ENCODE measurements at regions of chr20 and their contacts with region 1.

Region 1: GRCh38 chr20:4076671-4077070 is 61.3 kb upstream of the RNF24 start:
- DNase-seq: no peak
- H3K4me3 ChIP-seq: no peak overlapping the region
- H3K27ac ChIP-seq: no peak overlapping the region
- H3K4me1 ChIP-seq: no peaks in the 10 kb centered on the region
- H3K27me3 ChIP-seq: no peaks in the 10 kb centered on the region
- CTCF ChIP-seq: no peak

Region 2: DNA sequence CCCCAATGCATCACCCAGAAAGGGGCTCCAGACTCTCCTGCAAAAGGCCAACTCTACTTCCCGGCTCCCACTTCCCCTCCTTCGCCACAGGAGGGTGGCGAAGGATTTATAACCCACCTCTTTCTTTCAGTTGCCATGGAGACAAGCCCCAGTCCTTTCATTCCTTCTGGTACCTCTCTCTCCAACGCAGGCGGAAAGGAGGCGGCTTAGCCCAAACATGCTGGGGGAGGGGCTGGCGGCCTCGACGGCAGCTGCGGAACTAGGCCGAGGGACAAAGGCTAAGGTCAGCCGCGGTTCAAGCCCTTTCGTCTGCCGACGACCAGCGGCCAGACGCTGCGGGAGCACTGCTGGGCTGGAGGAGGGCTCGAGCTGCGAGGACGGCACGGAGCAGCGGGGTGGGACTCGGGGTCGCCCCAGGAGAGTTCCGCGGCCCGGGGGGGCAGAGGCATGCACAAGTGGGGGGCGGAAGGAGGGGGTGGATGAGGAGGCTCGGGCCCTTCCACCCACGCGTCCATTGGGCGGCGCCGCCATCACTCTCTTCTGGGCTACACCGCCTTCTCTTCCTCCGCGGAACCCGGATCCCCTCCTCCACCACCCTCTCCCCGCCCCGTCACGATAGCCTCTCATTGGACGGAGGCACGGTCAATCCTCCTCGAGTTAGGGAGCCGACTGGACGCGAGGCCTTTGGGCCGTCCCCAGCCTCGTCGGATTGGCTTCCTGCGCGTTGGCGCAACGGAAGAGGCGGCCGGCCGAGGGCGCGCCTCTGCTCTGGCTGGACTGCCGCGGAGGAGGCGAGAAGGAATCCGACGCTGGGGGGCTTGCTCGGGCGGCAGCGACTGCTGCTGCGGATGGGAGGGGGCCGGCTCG is 187.8 kb before region 1 on chr20 and contains the start of gene PANK2:
- intact Hi-C with region 1: loop called (anchors 10 kb)
- DNase-seq: peak; percentile 100
- H3K4me3 ChIP-seq: peak within 1 kb of the TSS; percentile 91
- H3K27ac ChIP-seq: peak within 1 kb of the TSS; percentile 94
- H3K4me1 ChIP-seq: peaks cover 11% of the 10 kb centered on the region
- H3K27me3 ChIP-seq: no peaks in the 10 kb centered on the region
- CTCF ChIP-seq: peak; percentile 29
- total RNA-seq, gene PANK2: 29.7 to 31.3 TPM

Region 3: DNA sequence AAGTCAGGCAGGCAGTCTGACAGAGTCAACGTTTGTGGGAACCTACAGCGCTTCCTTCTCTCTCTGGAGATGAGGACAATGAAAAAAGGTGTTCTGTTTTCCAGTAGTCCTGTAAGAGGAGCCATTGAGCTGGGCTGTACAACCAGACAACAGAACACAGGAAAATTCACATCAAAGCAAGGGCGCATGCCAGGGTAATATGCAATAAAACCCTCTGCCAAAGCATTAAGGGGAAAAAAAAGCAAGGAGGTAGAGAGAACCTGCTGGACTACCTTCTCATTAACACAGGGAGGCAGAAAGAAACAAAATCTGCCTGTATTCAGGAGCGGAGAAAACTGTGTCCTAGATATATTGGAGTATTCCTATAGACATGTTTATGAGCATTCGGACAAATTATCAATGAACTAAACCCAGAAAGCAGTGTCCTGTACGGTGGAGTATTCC is 62.6 kb before region 1 on chr20:
- intact Hi-C with region 1: loop called (anchors 5 kb)
- DNase-seq: peak; percentile 78
- H3K4me3 ChIP-seq: peak overlapping the region; percentile 79
- H3K27ac ChIP-seq: peak overlapping the region; percentile 64
- H3K4me1 ChIP-seq: peaks cover 16% of the 10 kb centered on the region
- H3K27me3 ChIP-seq: no peaks in the 10 kb centered on the region
- CTCF ChIP-seq: peak; percentile 35

Measured in colonic mucosa (tissue), 4 donors.